Endothelial cell of umbilical vein (primary cell): ENCODE measurements at regions of chr4 and their contacts with region 1.

Region 1: DNA sequence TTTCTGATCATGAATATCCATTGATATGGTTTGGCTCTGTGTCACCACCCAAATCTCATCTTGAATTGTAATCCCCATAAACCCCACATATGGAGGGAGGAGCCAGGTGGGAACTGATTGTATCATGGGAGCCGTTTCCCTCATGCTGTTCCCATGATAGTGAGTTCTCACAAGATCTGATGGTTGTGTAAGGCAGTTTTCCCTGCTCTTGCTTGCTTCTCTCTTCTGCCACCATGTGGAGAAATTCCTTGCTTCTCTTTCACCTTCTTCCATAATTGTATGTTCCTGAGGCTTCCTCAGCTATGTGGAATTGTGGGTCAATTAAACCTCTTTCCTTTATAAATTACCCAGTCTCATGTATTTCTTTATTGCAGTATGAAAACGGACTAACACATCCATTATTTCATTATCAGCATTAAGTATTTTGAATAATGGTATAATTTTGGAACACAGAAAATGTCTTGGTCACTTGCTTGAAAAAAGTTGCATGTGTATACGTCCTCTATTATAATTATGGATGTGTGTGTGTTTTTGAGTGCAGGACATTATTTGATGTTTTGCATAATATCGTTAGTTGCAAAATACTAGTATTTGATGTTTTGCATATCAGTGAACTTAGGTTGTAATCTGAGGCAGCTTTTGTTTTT is 334.6 kb downstream of the PCDH10 start:
- DNase-seq: peak; percentile 55
- H3K4me3 ChIP-seq: no peak overlapping the region
- H3K27ac ChIP-seq: no peak overlapping the region
- H3K4me1 ChIP-seq: no peaks in the 10 kb centered on the region
- H3K27me3 ChIP-seq: no peaks in the 10 kb centered on the region
- CTCF ChIP-seq: peak; percentile 20 to 42
- POLR2A ChIP-seq: no peak

Region 2: GRCh38 chr4:133565379-133565778 is 81.7 kb after region 1 on chr4:
- CTCF ChIA-PET with region 1: no interaction called
- POLR2A ChIA-PET with region 1: no interaction called
- dilution Hi-C with region 1: no loop called
- intact Hi-C with region 1: no loop called
- DNase-seq: peak; percentile 91
- H3K4me3 ChIP-seq: peak overlapping the region in 2 of 3 experiments; percentile 7 to 28
- H3K27ac ChIP-seq: no peak overlapping the region
- H3K4me1 ChIP-seq: no peaks in the 10 kb centered on the region
- H3K27me3 ChIP-seq: no peaks in the 10 kb centered on the region
- CTCF ChIP-seq: no peak
- POLR2A ChIP-seq: no peak

Region 3: DNA sequence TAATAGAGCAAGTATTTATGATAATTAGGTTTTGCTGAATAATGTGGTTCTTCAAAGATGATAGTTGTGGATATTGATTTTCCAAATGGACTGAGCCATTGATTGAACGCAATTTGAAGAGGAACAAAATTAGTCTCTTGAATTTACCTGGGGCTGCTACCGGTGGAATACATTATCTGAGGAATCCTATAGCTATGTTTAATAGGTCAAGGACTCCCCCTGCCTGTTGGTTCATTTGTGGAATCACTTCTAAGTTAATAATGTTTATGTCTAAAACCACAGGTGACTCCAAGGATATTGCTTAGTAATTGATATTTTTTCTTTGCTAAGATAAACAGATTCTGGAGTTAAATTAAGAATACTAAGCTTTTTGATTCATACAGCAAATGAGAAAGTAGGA is 1293.9 kb after region 1 on chr4:
- CTCF ChIA-PET with region 1: interaction called, 11 read pairs
- POLR2A ChIA-PET with region 1: no interaction called
- dilution Hi-C with region 1: no loop called
- intact Hi-C with region 1: no loop called
- DNase-seq: peak; percentile 64
- H3K4me3 ChIP-seq: no peak overlapping the region
- H3K27ac ChIP-seq: no peak overlapping the region
- H3K4me1 ChIP-seq: peaks cover 2% of the 10 kb centered on the region
- H3K27me3 ChIP-seq: no peaks in the 10 kb centered on the region
- CTCF ChIP-seq: peak in 1 of 2 donors; percentile 13
- POLR2A ChIP-seq: no peak

Region 4: DNA sequence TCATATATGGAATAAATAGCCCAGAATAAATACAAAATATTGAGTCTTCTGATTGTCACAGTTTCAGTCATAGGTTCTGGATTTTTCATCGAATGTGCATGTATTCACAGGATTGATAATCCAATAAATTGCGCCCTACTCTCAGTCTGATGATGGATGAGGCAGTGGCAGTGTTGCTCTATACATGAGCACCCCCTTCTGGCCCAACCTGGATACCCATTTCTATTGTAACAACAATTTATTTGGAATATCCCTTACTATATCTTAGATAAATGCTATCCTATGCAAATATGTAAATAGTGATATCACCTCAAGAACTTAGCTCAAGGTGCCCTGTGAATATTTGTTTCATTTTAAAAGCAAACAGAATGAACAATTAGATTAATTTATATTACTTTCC is 1451.6 kb after region 1 on chr4:
- CTCF ChIA-PET with region 1: no interaction called
- POLR2A ChIA-PET with region 1: no interaction called
- dilution Hi-C with region 1: no loop called
- intact Hi-C with region 1: loop called (anchors 10 kb)
- DNase-seq: peak; percentile 49
- H3K4me3 ChIP-seq: no peak overlapping the region
- H3K27ac ChIP-seq: no peak overlapping the region
- H3K4me1 ChIP-seq: no peaks in the 10 kb centered on the region
- H3K27me3 ChIP-seq: no peaks in the 10 kb centered on the region
- CTCF ChIP-seq: peak in 1 of 2 donors; percentile 47
- POLR2A ChIP-seq: no peak